Transverse colon (tissue), 4 donors: ENCODE measurements at regions of chr17 and their contacts with region 1.

Region 1: DNA sequence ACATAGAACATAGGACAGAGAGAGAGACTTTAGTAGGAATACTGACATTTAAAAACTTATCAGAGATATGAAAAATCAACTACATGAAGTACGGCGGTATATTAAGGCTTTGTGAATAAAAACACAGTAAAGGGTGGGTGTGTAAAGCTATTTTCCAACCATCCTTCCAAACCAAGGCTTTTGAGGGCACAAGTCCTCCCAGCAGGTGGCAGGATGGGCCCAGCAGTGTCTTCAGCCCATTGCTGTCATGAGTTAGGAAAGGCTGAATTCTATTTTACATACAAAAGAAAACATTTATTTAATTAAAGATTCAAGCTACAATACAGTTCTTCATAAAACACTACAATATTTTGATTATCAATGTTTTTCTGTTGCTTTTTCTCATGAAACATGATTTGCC is 841.4 kb downstream of the KCNJ18 start:
- DNase-seq: no peak
- H3K4me3 ChIP-seq: no peak overlapping the region
- H3K27ac ChIP-seq: no peak overlapping the region
- H3K4me1 ChIP-seq: no peaks in the 10 kb centered on the region
- H3K27me3 ChIP-seq: no peaks in the 10 kb centered on the region
- CTCF ChIP-seq: no peak
- EP300 ChIP-seq: no peak
- POLR2A ChIP-seq: no peak

Region 2: DNA sequence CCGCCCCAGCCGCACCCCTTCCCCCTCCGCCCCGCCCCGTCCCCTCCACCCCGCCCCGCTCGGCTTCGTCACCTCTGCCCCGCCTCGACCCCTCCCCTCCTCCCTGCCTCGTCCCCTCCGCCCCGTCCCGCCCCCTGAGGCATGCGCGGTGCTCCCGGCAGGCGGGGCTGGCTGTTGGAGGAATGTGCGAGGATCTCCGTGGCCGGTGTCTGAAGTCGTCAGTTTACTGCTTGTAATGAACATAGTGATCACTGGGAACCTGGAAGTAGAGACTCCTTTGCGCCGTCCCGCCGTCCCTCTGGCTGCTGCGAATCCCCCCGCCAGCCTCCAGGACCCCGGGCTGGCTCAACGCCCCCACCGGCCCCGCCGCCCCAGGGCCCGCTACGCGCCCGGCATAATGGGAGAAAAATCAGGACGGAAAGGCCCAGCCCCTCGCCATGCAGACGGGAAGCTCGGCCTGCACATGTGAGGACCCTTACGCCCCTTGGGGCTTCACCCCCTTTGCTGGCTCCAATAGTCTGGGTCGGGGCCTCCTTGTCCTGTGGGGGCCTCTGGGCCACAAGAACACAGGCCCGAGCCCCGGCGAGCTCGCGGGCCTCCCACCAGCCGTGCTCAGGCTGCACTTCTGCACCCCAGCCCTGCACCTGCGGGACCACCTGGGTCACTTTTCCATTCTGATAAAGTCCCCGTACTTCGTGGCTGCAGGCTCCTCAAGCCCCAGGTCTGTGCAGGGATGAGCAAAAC is 98.3 kb before region 1 on chr17:
- in situ Hi-C with region 1: loop called in 1 of 4 experiments (anchors 25 kb)
- intact Hi-C with region 1: no loop called
- DNase-seq: no peak
- H3K4me3 ChIP-seq: no peak overlapping the region
- H3K27ac ChIP-seq: no peak overlapping the region
- H3K4me1 ChIP-seq: no peaks in the 10 kb centered on the region
- H3K27me3 ChIP-seq: no peaks in the 10 kb centered on the region
- CTCF ChIP-seq: no peak
- EP300 ChIP-seq: no peak
- POLR2A ChIP-seq: no peak

Region 3: GRCh38 chr17:22463110-22463850 is 70.5 kb before region 1 on chr17:
- in situ Hi-C with region 1: no loop called
- intact Hi-C with region 1: no loop called
- DNase-seq: no peak
- H3K4me3 ChIP-seq: no peak overlapping the region
- H3K27ac ChIP-seq: no peak overlapping the region
- H3K4me1 ChIP-seq: no peaks in the 10 kb centered on the region
- H3K27me3 ChIP-seq: no peaks in the 10 kb centered on the region
- CTCF ChIP-seq: no peak
- EP300 ChIP-seq: no peak
- POLR2A ChIP-seq: no peak

Region 4: GRCh38 chr17:22644264-22644663 is 110.5 kb after region 1 on chr17:
- in situ Hi-C with region 1: loop called in 2 of 4 experiments (anchors 25 kb)
- intact Hi-C with region 1: no loop called
- DNase-seq: no peak
- H3K4me3 ChIP-seq: no peak overlapping the region
- H3K27ac ChIP-seq: no peak overlapping the region
- H3K4me1 ChIP-seq: no peaks in the 10 kb centered on the region
- H3K27me3 ChIP-seq: no peaks in the 10 kb centered on the region
- CTCF ChIP-seq: no peak
- EP300 ChIP-seq: no peak
- POLR2A ChIP-seq: no peak